ENCODE measurements at regions of chr5 and their contacts with region 1.

Region 1: GRCh38 chr5:112921833-112922817 is at the start of gene REEP5:
- DNase-seq: peak; percentile 89
- H3K4me3 Mint-ChIP-seq: peak within 1 kb of the TSS; percentile 95
- H3K27ac Mint-ChIP-seq: peak within 1 kb of the TSS; percentile 94
- H3K4me1 Mint-ChIP-seq: peaks cover 60% of the 10 kb centered on the region
- H3K27me3 Mint-ChIP-seq: no peaks in the 10 kb centered on the region
- total RNA-seq, gene REEP5: 64.6 to 67.4 TPM

Region 2: DNA sequence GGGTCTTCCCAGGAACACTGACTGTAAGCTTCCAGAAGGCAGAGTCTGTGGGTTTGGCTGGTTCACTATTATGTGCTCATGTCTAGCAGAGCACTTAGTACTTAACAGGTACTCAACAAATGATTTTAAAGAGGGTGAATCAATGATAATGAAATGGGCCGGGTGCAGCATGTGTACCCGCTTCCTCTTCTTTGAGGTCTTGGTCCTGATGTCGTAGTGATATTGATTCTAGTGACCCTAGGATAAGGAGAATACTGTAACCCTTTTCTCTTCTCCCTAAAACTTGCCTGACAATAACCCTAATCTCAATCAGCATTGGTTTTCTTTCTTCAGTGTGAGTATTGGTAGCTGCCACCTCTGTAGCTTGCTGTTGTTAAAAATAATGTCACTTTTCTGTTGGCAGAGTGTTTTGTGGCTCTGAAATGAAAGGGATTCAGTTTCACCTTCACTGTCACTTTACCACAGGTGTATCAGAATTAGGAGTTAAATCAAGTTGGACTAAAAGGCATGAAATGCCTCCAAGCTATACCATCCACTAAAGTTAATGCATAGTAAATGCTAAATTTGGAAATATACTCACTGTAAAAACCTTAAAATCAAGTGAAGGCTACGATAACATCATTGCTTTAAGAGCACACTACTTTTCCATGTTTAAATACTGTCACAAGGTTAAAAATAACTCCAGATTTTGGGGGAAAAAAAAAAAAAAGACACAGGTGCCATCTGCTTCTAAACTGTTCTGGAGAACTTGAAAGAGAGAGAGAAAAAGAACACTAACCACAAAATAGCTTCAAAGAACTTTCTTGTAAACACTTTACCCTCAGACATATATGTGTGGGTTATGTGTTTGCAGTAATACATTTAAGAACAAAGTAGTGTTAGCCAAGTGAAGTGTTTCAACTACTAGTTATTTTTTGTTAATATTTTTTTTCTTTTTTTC is 1692.0 kb before region 1 on chr5:
- CTCF ChIA-PET with region 1: no interaction called
- POLR2A ChIA-PET with region 1: no interaction called
- intact Hi-C with region 1: loop called (anchors 10 kb)
- DNase-seq: no peak
- H3K4me3 Mint-ChIP-seq: peak overlapping the region; percentile 66
- H3K27ac Mint-ChIP-seq: peak overlapping the region; percentile 85
- H3K4me1 Mint-ChIP-seq: peaks cover 81% of the 10 kb centered on the region
- H3K27me3 Mint-ChIP-seq: no peaks in the 10 kb centered on the region

Region 3: DNA sequence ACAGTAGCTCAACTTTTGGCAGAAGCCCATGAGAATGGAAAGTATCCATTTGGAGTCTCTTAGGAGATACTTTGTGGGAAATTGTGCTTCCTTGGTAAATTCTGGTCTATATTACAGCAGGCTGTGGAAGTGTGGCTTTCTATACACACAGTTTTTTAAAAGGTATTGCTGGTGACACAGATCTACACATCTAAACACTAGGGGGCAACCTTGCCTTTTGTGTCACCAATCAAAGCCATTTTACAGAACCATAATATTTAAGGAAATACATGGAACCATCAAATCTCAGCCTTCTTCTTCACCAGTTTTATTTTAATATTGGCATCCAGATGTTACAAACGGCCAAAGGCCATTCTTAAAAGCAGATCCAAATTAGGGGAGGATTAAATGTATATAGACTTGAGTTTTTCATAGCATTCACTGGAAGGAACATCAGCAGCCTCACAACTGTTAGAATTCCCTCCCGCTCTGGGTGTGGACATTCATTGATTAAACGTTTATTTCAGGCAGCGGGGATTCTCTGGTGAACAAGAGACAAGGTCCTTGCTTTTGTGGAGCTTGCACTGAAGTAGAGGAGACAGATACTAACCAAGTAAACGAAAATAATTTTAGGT is 370.6 kb before region 1 on chr5:
- CTCF ChIA-PET with region 1: no interaction called
- POLR2A ChIA-PET with region 1: no interaction called
- intact Hi-C with region 1: loop called (anchors 2 kb)
- DNase-seq: peak; percentile 14
- H3K4me3 Mint-ChIP-seq: no peak overlapping the region
- H3K27ac Mint-ChIP-seq: no peak overlapping the region
- H3K4me1 Mint-ChIP-seq: peaks cover 3% of the 10 kb centered on the region
- H3K27me3 Mint-ChIP-seq: no peaks in the 10 kb centered on the region

Region 4: GRCh38 chr5:112860929-112861637 is 61.0 kb before region 1 on chr5 and contains the start of gene SRP19:
- CTCF ChIA-PET with region 1: interaction called, 7 read pairs
- POLR2A ChIA-PET with region 1: interaction called, 6 read pairs
- intact Hi-C with region 1: loop called (anchors 1 kb)
- DNase-seq: peak; percentile 95
- H3K4me3 Mint-ChIP-seq: peak within 1 kb of the TSS; percentile 86
- H3K27ac Mint-ChIP-seq: peak within 1 kb of the TSS; percentile 95
- H3K4me1 Mint-ChIP-seq: peaks cover 33% of the 10 kb centered on the region
- H3K27me3 Mint-ChIP-seq: peaks cover 3% of the 10 kb centered on the region
- total RNA-seq, gene SRP19: 49.1 to 51.6 TPM

Region 5: GRCh38 chr5:112968411-112969106 is 46.4 kb after region 1 on chr5:
- CTCF ChIA-PET with region 1: interaction called, 13 read pairs
- POLR2A ChIA-PET with region 1: interaction called, 7 read pairs
- intact Hi-C with region 1: loop called (anchors 1 kb)
- DNase-seq: no peak
- H3K4me3 Mint-ChIP-seq: no peak overlapping the region
- H3K27ac Mint-ChIP-seq: no peak overlapping the region
- H3K4me1 Mint-ChIP-seq: peaks cover 45% of the 10 kb centered on the region
- H3K27me3 Mint-ChIP-seq: no peaks in the 10 kb centered on the region

Region 6: GRCh38 chr5:113513384-113514288 is 591.5 kb after region 1 on chr5 and contains the start of gene YTHDC2:
- CTCF ChIA-PET with region 1: no interaction called
- POLR2A ChIA-PET with region 1: no interaction called
- intact Hi-C with region 1: loop called (anchors 1 kb)
- DNase-seq: peak; percentile 93
- H3K4me3 Mint-ChIP-seq: peak within 1 kb of the TSS; percentile 90
- H3K27ac Mint-ChIP-seq: peak within 1 kb of the TSS; percentile 79
- H3K4me1 Mint-ChIP-seq: peaks cover 28% of the 10 kb centered on the region
- H3K27me3 Mint-ChIP-seq: peaks cover 7% of the 10 kb centered on the region
- total RNA-seq, gene YTHDC2: 27.3 to 28.9 TPM

Measured in activated CD4-positive, alpha-beta memory T cell treated with anti-CD3 and anti-CD28 coated beads for 36 hours (primary cell).